Psoas muscle (tissue), 8 donors: ENCODE measurements at regions of chr1 and their contacts with region 1.

Region 1: GRCh38 chr1:39525366-39526165 is 34.1 kb downstream of the BMP8A start:
- DNase-seq: no peak
- ATAC-seq: peak in 1 of 4 donors; percentile 19
- H3K4me3 ChIP-seq: no peak overlapping the region
- H3K27ac ChIP-seq: no peak overlapping the region
- H3K4me1 ChIP-seq: no peaks in the 10 kb centered on the region
- H3K27me3 ChIP-seq: no peaks in the 10 kb centered on the region
- CTCF ChIP-seq: no peak

Region 2: GRCh38 chr1:39501666-39502065 is 23.9 kb before region 1 on chr1:
- intact Hi-C with region 1: loop called in 1 of 2 experiments (anchors 2 kb)
- DNase-seq: no peak
- ATAC-seq: peak; percentile 49 to 81 (median 64)
- H3K4me3 ChIP-seq: no peak overlapping the region
- H3K27ac ChIP-seq: no peak overlapping the region
- H3K4me1 ChIP-seq: no peaks in the 10 kb centered on the region
- H3K27me3 ChIP-seq: no peaks in the 10 kb centered on the region
- CTCF ChIP-seq: no peak

Region 3: GRCh38 chr1:39509360-39510009 is 16.1 kb before region 1 on chr1:
- intact Hi-C with region 1: loop called in 1 of 2 experiments (anchors 2 kb)
- DNase-seq: peak; percentile 55 to 67
- ATAC-seq: peak; percentile 46 to 70 (median 64)
- H3K4me3 ChIP-seq: no peak overlapping the region
- H3K27ac ChIP-seq: no peak overlapping the region
- H3K4me1 ChIP-seq: no peaks in the 10 kb centered on the region
- H3K27me3 ChIP-seq: peaks cover 0 to under 1% (median 0%) of the 10 kb centered on the region in 3 donors
- CTCF ChIP-seq: no peak